Mammary epithelial cell (primary cell): ENCODE measurements at regions of chr9 and their contacts with region 1.

Region 1: GRCh38 chr9:111965566-111966019 is 69.0 kb downstream of the UGCG start:
- DNase-seq: peak; percentile 99
- H3K4me3 ChIP-seq: no peak overlapping the region
- H3K27ac ChIP-seq: peak overlapping the region; percentile 93
- H3K4me1 ChIP-seq: peaks cover 35% of the 10 kb centered on the region
- H3K27me3 ChIP-seq: no peaks in the 10 kb centered on the region
- CTCF ChIP-seq: peak; percentile 11 to 22

Region 2: GRCh38 chr9:111926421-111926875 is 39.1 kb before region 1 on chr9:
- CTCF ChIA-PET with region 1: no interaction called
- dilution Hi-C with region 1: no loop called
- in situ Hi-C with region 1: no loop called
- intact Hi-C with region 1: loop called (anchors 5 kb)
- DNase-seq: no peak
- H3K4me3 ChIP-seq: no peak overlapping the region
- H3K27ac ChIP-seq: no peak overlapping the region
- H3K4me1 ChIP-seq: peaks cover 7% of the 10 kb centered on the region
- H3K27me3 ChIP-seq: no peaks in the 10 kb centered on the region
- CTCF ChIP-seq: no peak